Mammary epithelial cell (primary cell): ENCODE measurements at regions of chr5 and their contacts with region 1.

Region 1: GRCh38 chr5:171961117-171961516 is 45.3 kb downstream of the FBXW11 start:
- DNase-seq: no peak
- H3K4me3 ChIP-seq: no peak overlapping the region
- H3K27ac ChIP-seq: no peak overlapping the region
- H3K4me1 ChIP-seq: peaks cover 8% of the 10 kb centered on the region
- H3K27me3 ChIP-seq: no peaks in the 10 kb centered on the region
- CTCF ChIP-seq: no peak

Region 2: GRCh38 chr5:171984748-171985419 is 23.8 kb after region 1 on chr5:
- CTCF ChIA-PET with region 1: no interaction called
- dilution Hi-C with region 1: no loop called
- in situ Hi-C with region 1: no loop called
- intact Hi-C with region 1: no loop called
- DNase-seq: peak; percentile 89
- H3K4me3 ChIP-seq: no peak overlapping the region
- H3K27ac ChIP-seq: no peak overlapping the region
- H3K4me1 ChIP-seq: peaks cover 11% of the 10 kb centered on the region
- H3K27me3 ChIP-seq: no peaks in the 10 kb centered on the region
- CTCF ChIP-seq: no peak

Region 3: GRCh38 chr5:172006321-172007174 is 45.4 kb after region 1 on chr5 and contains the start of gene FBXW11:
- CTCF ChIA-PET with region 1: no interaction called
- dilution Hi-C with region 1: no loop called
- in situ Hi-C with region 1: no loop called
- intact Hi-C with region 1: loop called (anchors 5 kb)
- DNase-seq: peak; percentile 97
- H3K4me3 ChIP-seq: peak within 1 kb of the TSS; percentile 73 to 98 (median 77)
- H3K27ac ChIP-seq: peak within 1 kb of the TSS; percentile 88
- H3K4me1 ChIP-seq: peaks cover 54% of the 10 kb centered on the region
- H3K27me3 ChIP-seq: no peaks in the 10 kb centered on the region
- CTCF ChIP-seq: no peak
- total RNA-seq, gene FBXW11: 39.2 to 62.0 TPM